K562 (cell line): ENCODE measurements at regions of chr12 and their contacts with region 1.

Region 1: DNA sequence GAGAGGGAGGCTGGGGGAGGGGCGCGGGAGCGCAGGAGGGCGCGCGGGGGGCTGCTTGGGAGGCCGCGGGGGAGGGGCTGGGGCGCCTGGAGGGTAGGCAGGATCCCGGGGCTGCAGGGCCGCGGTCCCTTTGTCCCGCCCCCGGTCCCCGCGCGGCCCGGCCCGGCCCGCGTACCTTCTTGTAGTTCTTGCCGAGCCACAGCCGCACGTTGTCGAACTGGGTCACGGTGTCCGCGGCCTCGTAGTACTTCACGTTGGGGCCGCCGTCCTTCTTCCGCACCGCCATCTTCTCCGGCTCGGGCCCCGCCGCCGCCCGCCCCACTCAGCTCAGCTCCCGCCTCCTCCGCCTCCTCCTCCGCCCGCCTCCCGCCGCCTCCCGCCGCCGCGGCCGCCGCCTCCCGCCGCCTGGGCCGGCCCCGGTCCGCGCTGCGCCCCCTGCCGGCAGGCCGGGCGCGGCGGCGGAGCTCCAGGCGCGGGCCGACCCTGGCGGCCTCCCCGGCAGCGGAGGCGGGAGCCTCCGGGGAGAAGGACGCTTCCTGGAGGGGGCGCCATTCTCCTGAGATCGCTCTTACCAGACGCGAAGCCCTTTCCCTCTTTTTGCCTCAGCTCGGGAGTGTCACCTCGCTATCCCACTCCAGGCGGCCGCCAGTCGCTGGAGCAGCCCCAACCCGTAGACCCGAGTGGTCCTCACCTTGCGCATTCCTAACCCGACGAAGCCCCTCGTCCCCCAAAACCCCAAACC is at the start of gene SMARCC2:
- DNase-seq: peak; percentile 94 to 95 (median 94)
- ATAC-seq: peak; percentile 89
- H3K4me3 ChIP-seq: peak within 1 kb of the TSS; percentile 85
- H3K27ac ChIP-seq: peak within 1 kb of the TSS; percentile 88
- H3K4me1 ChIP-seq: peaks cover 4 to 16% of the 10 kb centered on the region in 2 experiments; a peak in 3 of 5 replicates
- H3K27me3 ChIP-seq: no peaks in the 10 kb centered on the region
- CTCF ChIP-seq: peak; percentile 72 to 95 (median 95)
- EP300 ChIP-seq: peak; percentile 6; the same call in 1 of the 2 replicates
- POLR2A ChIP-seq: peak; percentile 72; the same call in 1 of the 2 replicates
- RAD21 ChIP-seq: peak; percentile 40 to 73
- polyA plus RNA-seq, gene SMARCC2: 11.9 to 29.1 TPM

Region 2: DNA sequence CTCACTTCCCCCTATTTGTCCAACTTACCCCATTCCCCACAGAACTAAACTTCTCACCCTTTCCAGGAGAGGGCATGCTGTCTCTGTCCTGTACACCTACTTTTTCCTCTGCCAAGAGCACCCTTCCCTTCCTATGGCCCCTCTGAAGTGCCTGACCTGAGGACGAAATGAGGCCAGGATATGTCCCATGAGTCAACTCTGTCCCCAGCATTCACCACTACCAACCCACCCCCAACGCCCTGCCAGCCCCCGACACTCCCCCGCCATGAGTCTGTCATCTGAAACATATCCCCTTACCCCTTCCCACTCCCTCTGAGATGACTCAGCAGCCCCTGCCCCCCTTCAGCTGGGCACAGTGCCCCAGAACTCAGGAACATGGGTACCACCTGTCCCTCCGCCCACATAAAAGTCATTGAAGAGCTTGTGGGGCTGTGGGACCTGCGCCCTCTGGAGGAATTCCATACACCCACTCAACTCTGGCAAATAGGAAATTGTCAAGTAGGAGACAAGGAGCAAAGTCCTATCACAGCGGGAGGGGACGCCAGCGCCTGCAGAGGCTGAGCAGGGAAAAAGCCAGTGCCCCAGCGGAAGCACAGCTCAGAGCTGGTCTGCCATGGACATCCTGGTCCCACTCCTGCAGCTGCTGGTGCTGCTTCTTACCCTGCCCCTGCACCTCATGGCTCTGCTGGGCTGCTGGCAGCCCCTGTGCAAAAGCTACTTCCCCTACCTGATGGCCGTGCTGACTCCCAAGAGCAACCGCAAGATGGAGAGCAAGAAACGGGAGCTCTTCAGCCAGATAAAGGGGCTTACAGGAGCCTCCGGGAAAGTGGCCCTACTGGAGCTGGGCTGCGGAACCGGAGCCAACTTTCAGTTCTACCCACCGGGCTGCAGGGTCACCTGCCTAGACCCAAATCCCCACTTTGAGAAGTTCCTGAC is 507.9 kb before region 1 on chr12:
- CTCF ChIA-PET with region 1: no interaction called
- POLR2A ChIA-PET with region 1: no interaction called
- in situ Hi-C with region 1: no loop called
- intact Hi-C with region 1: no loop called
- DNase-seq: peak in 3 of 4 experiments; percentile 20 to 71 (median 56)
- ATAC-seq: peak; percentile 84
- H3K4me3 ChIP-seq: peak overlapping the region; percentile 29
- H3K27ac ChIP-seq: no peak overlapping the region; the same call in 2 of the 3 replicates
- H3K4me1 ChIP-seq: peaks cover 0 to 11% of the 10 kb centered on the region in 2 experiments; a peak in 2 of 5 replicates
- H3K27me3 ChIP-seq: peaks cover 29 to 50% of the 10 kb centered on the region in 2 experiments
- CTCF ChIP-seq: peak; percentile 55 to 80 (median 64)
- EP300 ChIP-seq: no peak
- POLR2A ChIP-seq: no peak
- RAD21 ChIP-seq: peak in 1 of 2 experiments; percentile 22; a peak in 3 of 4 replicates

Region 3: DNA sequence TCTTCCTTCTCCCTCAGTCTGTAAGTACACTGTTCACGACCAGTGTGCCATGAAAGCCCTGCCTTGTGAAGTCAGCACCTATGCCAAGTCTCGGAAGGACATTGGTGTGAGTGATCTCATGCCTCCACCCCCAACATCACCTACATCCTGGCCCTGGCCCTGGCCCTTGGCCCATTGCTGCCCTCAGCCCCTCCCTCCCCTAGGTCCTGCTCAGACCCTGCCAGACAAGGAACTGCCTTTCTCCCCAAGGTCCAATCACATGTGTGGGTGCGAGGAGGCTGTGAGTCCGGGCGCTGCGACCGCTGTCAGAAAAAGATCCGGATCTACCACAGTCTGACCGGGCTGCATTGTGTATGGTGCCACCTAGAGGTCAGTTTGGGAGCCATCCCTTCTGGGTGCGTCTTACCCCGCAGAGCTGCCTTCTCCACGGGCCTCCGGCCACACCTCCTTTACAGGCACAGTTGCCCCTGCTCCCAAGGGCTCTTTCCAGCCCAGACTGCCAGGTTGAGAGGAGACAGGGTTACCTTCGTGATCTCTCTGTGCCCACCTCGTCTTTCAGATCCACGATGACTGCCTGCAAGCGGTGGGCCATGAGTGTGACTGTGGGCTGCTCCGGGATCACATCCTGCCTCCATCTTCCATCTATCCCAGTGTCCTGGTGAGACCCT is 249.1 kb before region 1 on chr12:
- CTCF ChIA-PET with region 1: no interaction called
- POLR2A ChIA-PET with region 1: no interaction called
- in situ Hi-C with region 1: no loop called
- intact Hi-C with region 1: no loop called
- DNase-seq: peak; percentile 87 to 92 (median 89)
- ATAC-seq: peak; percentile 99
- H3K4me3 ChIP-seq: no peak overlapping the region
- H3K27ac ChIP-seq: no peak overlapping the region
- H3K4me1 ChIP-seq: peaks cover 7 to 13% of the 10 kb centered on the region in 2 experiments; a peak in 4 of 5 replicates
- H3K27me3 ChIP-seq: no peaks in the 10 kb centered on the region; a peak in 1 of 5 replicates
- CTCF ChIP-seq: peak; percentile 89 to 97 (median 94)
- EP300 ChIP-seq: no peak
- POLR2A ChIP-seq: no peak
- RAD21 ChIP-seq: peak; percentile 75 to 88

Region 4: DNA sequence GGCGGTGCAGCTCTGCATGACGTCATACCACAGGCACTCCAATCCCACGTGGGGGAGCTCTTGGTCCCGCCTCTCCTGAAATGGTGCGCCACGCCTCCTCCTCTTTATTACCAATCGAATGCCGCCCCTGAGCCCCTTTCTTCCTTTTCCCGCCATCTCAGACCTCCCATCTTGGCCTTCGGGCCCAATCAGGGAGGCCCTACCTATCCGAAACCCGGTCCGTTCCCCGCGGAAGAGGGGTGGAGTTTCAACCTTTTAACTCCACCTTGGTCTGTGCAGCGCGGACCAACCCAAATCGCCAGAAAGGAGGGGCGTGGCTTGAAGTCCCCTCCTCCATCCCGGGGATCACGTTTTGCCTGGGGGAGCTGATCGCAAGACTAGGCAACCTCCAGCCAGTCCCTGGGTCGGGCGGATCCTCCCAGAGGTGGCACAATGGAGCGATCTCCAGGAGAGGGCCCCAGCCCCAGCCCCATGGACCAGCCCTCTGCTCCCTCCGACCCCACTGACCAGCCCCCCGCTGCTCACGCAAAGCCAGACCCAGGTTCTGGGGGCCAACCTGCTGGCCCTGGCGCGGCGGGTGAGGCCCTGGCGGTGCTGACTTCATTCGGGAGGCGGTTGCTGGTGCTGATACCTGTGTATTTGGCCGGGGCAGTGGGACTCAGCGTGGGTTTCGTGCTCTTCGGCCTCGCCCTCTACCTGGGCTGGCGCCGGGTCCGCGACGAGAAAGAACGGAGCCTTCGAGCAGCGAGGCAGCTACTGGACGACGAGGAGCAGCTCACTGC is 61.3 kb before region 1 on chr12 and contains the start of gene ESYT1:
- CTCF ChIA-PET with region 1: interaction called, 13 read pairs
- POLR2A ChIA-PET with region 1: interaction called, 15 read pairs
- in situ Hi-C with region 1: loop called (anchors 5 kb)
- intact Hi-C with region 1: loop called (anchors 1 kb)
- DNase-seq: peak; percentile 95 to 100 (median 97)
- ATAC-seq: peak; percentile 89
- H3K4me3 ChIP-seq: peak within 1 kb of the TSS; percentile 92
- H3K27ac ChIP-seq: peak within 1 kb of the TSS; percentile 93
- H3K4me1 ChIP-seq: peaks cover 31 to 46% of the 10 kb centered on the region in 2 experiments
- H3K27me3 ChIP-seq: no peaks in the 10 kb centered on the region
- CTCF ChIP-seq: peak in 2 of 3 experiments; percentile 3 to 14; a peak in 2 of 6 replicates
- EP300 ChIP-seq: no peak; the same call in none of the 2 replicates
- POLR2A ChIP-seq: peak; percentile 94
- RAD21 ChIP-seq: peak in 1 of 2 experiments; percentile 23; a peak in 2 of 4 replicates
- polyA plus RNA-seq, gene ESYT1: 156 to 194 TPM

Region 5: GRCh38 chr12:56165369-56165768 is 24.0 kb before region 1 on chr12:
- CTCF ChIA-PET with region 1: no interaction called
- POLR2A ChIA-PET with region 1: interaction called, 15 read pairs
- in situ Hi-C with region 1: no loop called
- intact Hi-C with region 1: no loop called
- DNase-seq: no peak
- ATAC-seq: no peak
- H3K4me3 ChIP-seq: no peak overlapping the region
- H3K27ac ChIP-seq: no peak overlapping the region
- H3K4me1 ChIP-seq: peaks cover 4 to 14% of the 10 kb centered on the region in 2 experiments; a peak in 4 of 5 replicates
- H3K27me3 ChIP-seq: no peaks in the 10 kb centered on the region
- CTCF ChIP-seq: no peak
- EP300 ChIP-seq: no peak
- POLR2A ChIP-seq: no peak
- RAD21 ChIP-seq: no peak

Region 6: GRCh38 chr12:56206457-56207166 is 17.3 kb after region 1 on chr12:
- CTCF ChIA-PET with region 1: interaction called, 4 read pairs
- POLR2A ChIA-PET with region 1: interaction called, 12 read pairs
- in situ Hi-C with region 1: no loop called
- intact Hi-C with region 1: no loop called
- DNase-seq: peak; percentile 58 to 76 (median 66)
- ATAC-seq: peak; percentile 88
- H3K4me3 ChIP-seq: no peak overlapping the region
- H3K27ac ChIP-seq: no peak overlapping the region
- H3K4me1 ChIP-seq: peaks cover 2 to 25% of the 10 kb centered on the region in 2 experiments; a peak in 3 of 5 replicates
- H3K27me3 ChIP-seq: no peaks in the 10 kb centered on the region
- CTCF ChIP-seq: peak; percentile 83 to 89 (median 83)
- EP300 ChIP-seq: no peak
- POLR2A ChIP-seq: no peak
- RAD21 ChIP-seq: peak; percentile 55 to 73

Region 7: DNA sequence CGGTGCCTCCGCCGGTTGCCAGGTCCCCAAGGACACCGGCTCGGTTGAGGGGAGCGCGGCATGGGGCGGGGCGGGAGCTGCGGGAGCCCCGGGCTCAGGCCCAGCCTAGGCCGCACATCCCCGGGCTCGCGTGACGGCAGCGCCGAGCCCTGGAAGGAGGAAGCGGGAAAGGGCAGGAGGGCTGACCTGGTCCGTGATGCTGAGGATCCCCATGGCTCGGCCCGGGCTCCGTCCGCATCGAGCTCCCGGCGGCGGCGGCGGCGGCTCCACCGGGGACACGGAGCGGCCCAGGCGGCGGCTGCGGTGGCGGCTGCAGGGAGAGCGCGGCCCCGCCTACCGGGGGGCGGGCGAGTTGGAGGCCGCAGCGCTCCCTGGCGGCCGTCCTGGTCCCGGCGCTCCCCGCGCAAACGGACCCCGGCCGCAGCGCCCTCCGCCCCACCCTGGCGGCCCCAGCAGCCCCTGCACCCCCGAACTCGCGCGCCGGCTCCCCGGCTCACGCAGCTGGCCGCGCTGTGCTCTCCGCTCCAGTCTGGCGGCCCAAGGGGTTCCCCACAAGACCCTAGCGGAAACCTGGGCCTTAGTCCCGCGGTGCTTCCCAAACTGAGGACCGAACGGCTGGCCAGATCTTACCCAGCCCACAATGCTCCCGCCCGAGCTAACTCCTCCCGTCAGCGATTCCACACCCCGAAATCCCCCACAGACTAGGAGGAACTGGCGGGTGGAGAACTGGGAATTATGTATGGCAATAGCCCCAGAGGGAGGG is 68.9 kb after region 1 on chr12 and contains the start of gene ANKRD52:
- CTCF ChIA-PET with region 1: interaction called, 11 read pairs
- POLR2A ChIA-PET with region 1: interaction called, 4 read pairs
- in situ Hi-C with region 1: loop called (anchors 5 kb)
- intact Hi-C with region 1: loop called (anchors 2 kb)
- DNase-seq: peak; percentile 87 to 94 (median 94)
- ATAC-seq: peak; percentile 97
- H3K4me3 ChIP-seq: peak within 1 kb of the TSS; percentile 91
- H3K27ac ChIP-seq: peak within 1 kb of the TSS; percentile 84
- H3K4me1 ChIP-seq: peaks cover 12 to 20% of the 10 kb centered on the region in 2 experiments; a peak in 4 of 5 replicates
- H3K27me3 ChIP-seq: no peaks in the 10 kb centered on the region
- CTCF ChIP-seq: peak; percentile 45 to 96 (median 69); a peak in 5 of 6 replicates
- EP300 ChIP-seq: no peak
- POLR2A ChIP-seq: peak; percentile 77
- RAD21 ChIP-seq: peak; percentile 51 to 53
- polyA plus RNA-seq, gene ANKRD52: 0.52 to 0.55 TPM

Region 8: GRCh38 chr12:56315622-56316473 is 126.5 kb after region 1 on chr12 and contains the start of gene CNPY2:
- CTCF ChIA-PET with region 1: interaction called, 3 read pairs
- POLR2A ChIA-PET with region 1: interaction called, 3 read pairs
- in situ Hi-C with region 1: no loop called
- intact Hi-C with region 1: loop called (anchors 1 kb)
- DNase-seq: peak; percentile 94 to 98 (median 95)
- ATAC-seq: peak; percentile 96
- H3K4me3 ChIP-seq: peak within 1 kb of the TSS; percentile 72
- H3K27ac ChIP-seq: peak within 1 kb of the TSS; percentile 77
- H3K4me1 ChIP-seq: peaks cover 11% of the 10 kb centered on the region in 2 experiments; a peak in 4 of 5 replicates
- H3K27me3 ChIP-seq: no peaks in the 10 kb centered on the region
- CTCF ChIP-seq: peak; percentile 69 to 76 (median 75)
- EP300 ChIP-seq: no peak
- POLR2A ChIP-seq: peak; percentile 88
- RAD21 ChIP-seq: peak; percentile 46 to 83
- polyA plus RNA-seq, gene CNPY2: 33.8 to 45.0 TPM

Region 9: DNA sequence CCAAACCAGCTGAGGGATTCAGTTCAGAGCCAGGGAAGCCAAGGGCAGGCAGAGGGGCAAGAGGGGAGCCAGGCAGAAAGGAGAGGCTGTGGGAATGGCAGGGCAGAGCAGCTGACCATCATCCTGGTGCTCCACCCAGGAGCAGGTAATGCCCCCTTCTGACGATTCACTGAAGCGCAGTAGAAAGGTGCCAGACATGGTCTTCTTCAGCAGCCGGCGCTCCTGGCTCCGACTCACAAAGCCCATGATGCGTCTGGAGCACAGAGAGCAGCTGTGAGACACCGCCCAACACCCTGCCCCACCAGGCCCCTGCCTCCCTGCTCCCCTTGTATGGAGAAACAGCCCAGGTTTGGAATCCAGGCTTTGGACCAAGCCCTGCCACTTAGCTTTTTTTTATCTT is 157.4 kb after region 1 on chr12:
- CTCF ChIA-PET with region 1: no interaction called
- POLR2A ChIA-PET with region 1: no interaction called
- in situ Hi-C with region 1: no loop called
- intact Hi-C with region 1: no loop called
- DNase-seq: peak in 1 of 4 experiments; percentile 43
- ATAC-seq: peak; percentile 73
- H3K4me3 ChIP-seq: no peak overlapping the region
- H3K27ac ChIP-seq: no peak overlapping the region
- H3K4me1 ChIP-seq: no peaks in the 10 kb centered on the region; a peak in 1 of 5 replicates
- H3K27me3 ChIP-seq: no peaks in the 10 kb centered on the region
- CTCF ChIP-seq: peak; percentile 44 to 58 (median 46)
- EP300 ChIP-seq: no peak
- POLR2A ChIP-seq: no peak
- RAD21 ChIP-seq: peak in 1 of 2 experiments; percentile 65; a peak in 2 of 4 replicates

Region 10: DNA sequence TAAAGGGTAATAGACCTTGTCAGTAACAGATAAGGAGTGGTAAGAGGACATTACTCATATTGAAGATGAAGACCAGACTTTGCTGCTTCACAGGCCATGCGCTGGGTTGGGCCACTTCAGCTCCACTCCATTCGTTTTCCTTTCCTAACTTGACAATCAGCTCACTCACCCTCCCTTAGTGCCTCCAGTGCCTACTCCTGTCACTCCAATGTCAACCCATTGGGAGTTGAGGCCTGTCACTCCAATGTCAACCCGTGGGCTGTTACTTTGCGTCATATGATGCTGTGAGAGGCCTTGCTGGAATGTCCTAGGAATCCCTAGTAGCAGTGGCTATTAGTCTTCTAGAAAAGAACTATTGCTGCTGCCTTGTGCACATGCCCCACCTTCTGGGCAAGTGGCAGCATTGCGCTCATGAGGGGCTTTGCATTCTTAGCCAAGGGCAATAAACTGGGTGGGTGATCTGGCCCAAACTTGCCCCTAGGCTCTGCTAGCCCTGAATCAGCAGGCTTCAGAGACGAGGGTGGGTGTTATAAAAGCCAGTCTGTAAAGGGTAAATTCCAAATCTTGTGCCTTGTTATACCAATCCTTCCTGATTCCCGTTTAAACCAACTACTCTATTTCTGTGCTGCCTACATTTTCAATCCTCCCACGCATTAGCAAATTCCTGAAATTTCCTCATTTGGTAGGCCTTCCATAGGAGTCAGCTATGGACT is 404.7 kb after region 1 on chr12:
- CTCF ChIA-PET with region 1: interaction called, 5 read pairs
- POLR2A ChIA-PET with region 1: no interaction called
- in situ Hi-C with region 1: no loop called
- intact Hi-C with region 1: loop called (anchors 1 kb)
- DNase-seq: peak; percentile 58 to 72 (median 67)
- ATAC-seq: peak; percentile 83
- H3K4me3 ChIP-seq: no peak overlapping the region
- H3K27ac ChIP-seq: no peak overlapping the region
- H3K4me1 ChIP-seq: peaks cover 0 to 2% of the 10 kb centered on the region in 2 experiments; a peak in 1 of 5 replicates
- H3K27me3 ChIP-seq: no peaks in the 10 kb centered on the region
- CTCF ChIP-seq: peak; percentile 86 to 90 (median 87)
- EP300 ChIP-seq: no peak
- POLR2A ChIP-seq: no peak
- RAD21 ChIP-seq: peak; percentile 60 to 79